ENCODE measurements at regions of chr4 and their contacts with region 1.

Region 1: GRCh38 chr4:121823505-121824170 is at the start of gene CCNA2:
- DNase-seq: peak; percentile 97 to 98
- H3K4me3 ChIP-seq: peak within 1 kb of the TSS; percentile 54 to 58
- H3K27ac ChIP-seq: peak within 1 kb of the TSS; percentile 64 to 76
- H3K4me1 ChIP-seq: peaks cover 0 to 14% (median 8%) of the 10 kb centered on the region in 4 donors
- H3K27me3 ChIP-seq: no peaks in the 10 kb centered on the region
- CTCF ChIP-seq: no peak

Region 2: GRCh38 chr4:121666091-121666679 is 157.5 kb before region 1 on chr4:
- intact Hi-C with region 1: no loop called
- DNase-seq: peak in 1 of 2 donors; percentile 39
- H3K4me3 ChIP-seq: no peak overlapping the region
- H3K27ac ChIP-seq: no peak overlapping the region
- H3K4me1 ChIP-seq: no peaks in the 10 kb centered on the region
- H3K27me3 ChIP-seq: no peaks in the 10 kb centered on the region
- CTCF ChIP-seq: no peak

Region 3: GRCh38 chr4:121869841-121870656 is 46.4 kb after region 1 on chr4 and contains the start of gene BBS7:
- intact Hi-C with region 1: loop called (anchors 5 kb)
- DNase-seq: peak; percentile 98 to 99
- H3K4me3 ChIP-seq: peak within 1 kb of the TSS; percentile 86 to 90
- H3K27ac ChIP-seq: peak within 1 kb of the TSS; percentile 93 to 94
- H3K4me1 ChIP-seq: peaks cover 0 to 16% (median 6%) of the 10 kb centered on the region in 4 donors
- H3K27me3 ChIP-seq: no peaks in the 10 kb centered on the region
- CTCF ChIP-seq: no peak

Measured in tibial artery (tissue), 4 donors.